Activated naive CD4-positive, alpha-beta T cell treated with anti-CD3 and anti-CD28 coated beads for 36 hours (primary cell): ENCODE measurements at regions of chr7 and their contacts with region 1.

Region 1: DNA sequence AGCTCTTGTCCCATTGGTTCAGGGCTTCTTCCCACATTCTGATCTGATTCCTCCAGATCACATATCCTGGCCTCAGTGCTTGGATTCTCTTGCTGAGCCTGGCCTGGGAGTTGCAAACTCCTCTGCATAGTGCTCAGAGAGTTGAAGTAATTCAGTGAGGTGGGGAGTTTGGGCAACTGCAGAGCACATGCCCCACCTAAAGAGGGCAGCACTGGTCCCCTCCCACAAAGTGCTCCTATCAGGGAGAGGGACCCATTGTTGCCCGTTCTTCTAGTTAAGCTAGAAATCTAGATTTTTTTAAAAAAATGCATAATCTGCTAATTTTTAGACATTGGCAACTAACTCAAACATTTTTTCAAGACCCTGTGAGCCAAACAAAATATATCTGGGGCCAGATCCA is 45.1 kb downstream of the CHN2 start:
- DNase-seq: peak; percentile 33
- H3K4me3 Mint-ChIP-seq: no peak overlapping the region
- H3K27ac Mint-ChIP-seq: no peak overlapping the region
- H3K4me1 Mint-ChIP-seq: peaks cover 14% of the 10 kb centered on the region
- H3K27me3 Mint-ChIP-seq: peaks cover 18% of the 10 kb centered on the region

Region 2: GRCh38 chr7:29285444-29285793 is 45.8 kb after region 1 on chr7:
- CTCF ChIA-PET with region 1: interaction called, 3 read pairs
- intact Hi-C with region 1: loop called (anchors 2 kb)
- DNase-seq: peak; percentile 67
- H3K4me3 Mint-ChIP-seq: no peak overlapping the region
- H3K27ac Mint-ChIP-seq: no peak overlapping the region
- H3K4me1 Mint-ChIP-seq: peaks cover 7% of the 10 kb centered on the region
- H3K27me3 Mint-ChIP-seq: peaks cover 14% of the 10 kb centered on the region

Region 3: DNA sequence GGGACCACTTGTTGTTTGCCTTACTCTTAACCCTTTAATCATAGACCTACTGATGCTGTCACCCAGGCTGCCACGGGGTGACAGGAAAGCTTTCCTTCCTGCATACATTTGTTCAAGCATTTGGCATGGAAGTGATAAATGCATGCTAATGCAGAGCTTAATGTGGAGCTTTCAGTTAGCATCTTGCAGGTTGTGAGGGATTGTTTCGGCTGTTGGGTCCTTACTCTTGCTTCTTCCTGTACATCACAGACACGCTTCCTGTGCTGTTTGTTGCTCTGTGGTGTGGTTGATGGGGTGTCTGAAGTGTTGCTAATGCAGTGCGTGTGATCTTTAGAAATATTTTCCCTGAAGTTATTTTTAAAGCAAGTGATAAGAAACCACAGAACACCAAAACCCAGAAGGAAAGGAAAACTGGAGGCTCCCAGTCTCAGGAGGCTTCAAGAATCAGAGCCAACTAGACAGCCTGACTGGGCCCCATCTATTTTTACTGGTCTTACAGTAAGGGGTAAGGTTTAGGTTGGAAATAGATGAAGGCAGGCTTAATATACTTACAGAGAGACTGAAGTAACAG is 98.0 kb after region 1 on chr7:
- CTCF ChIA-PET with region 1: no interaction called
- intact Hi-C with region 1: loop called (anchors 5 kb)
- DNase-seq: peak; percentile 32
- H3K4me3 Mint-ChIP-seq: no peak overlapping the region
- H3K27ac Mint-ChIP-seq: no peak overlapping the region
- H3K4me1 Mint-ChIP-seq: peaks cover 16% of the 10 kb centered on the region
- H3K27me3 Mint-ChIP-seq: no peaks in the 10 kb centered on the region

Region 4: DNA sequence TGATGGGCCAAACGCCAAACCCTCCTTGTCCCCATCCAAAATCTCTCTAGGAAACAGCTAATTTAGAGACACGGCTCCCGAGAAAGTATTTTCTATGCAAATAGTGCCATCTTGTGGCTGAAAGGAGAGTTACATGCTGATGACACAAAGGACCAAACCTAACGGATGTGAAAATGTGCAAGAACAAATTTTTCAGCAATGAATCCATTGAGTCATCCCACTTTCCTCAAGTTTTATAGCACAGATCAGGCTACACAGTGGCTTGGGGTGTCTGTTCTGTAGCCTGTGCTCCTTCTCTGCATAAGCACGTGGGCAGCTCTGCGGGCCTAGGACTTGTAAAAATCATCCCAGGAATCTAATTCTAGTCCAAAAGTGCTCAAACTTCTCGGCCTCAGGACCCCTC is 169.2 kb after region 1 on chr7:
- CTCF ChIA-PET with region 1: no interaction called
- intact Hi-C with region 1: loop called (anchors 2 kb)
- DNase-seq: peak; percentile 70
- H3K4me3 Mint-ChIP-seq: no peak overlapping the region
- H3K27ac Mint-ChIP-seq: no peak overlapping the region
- H3K4me1 Mint-ChIP-seq: no peaks in the 10 kb centered on the region
- H3K27me3 Mint-ChIP-seq: no peaks in the 10 kb centered on the region